T-cell (primary cell): ENCODE measurements at regions of chr14 and their contacts with region 1.

Region 1: GRCh38 chr14:106228541-106229158 is 702.3 kb downstream of the TMEM121 start:
- DNase-seq: peak in 33 of 35 experiments; percentile 7 to 71 (median 43)
- ATAC-seq: peak; percentile 97 to 98 (median 97)
- H3K4me3 ChIP-seq: peak overlapping the region; percentile 12 to 40
- H3K4me3 Mint-ChIP-seq: peak overlapping the region; percentile 71 to 83 (median 73)
- H3K27ac ChIP-seq: peak overlapping the region; percentile 77
- H3K27ac Mint-ChIP-seq: peak overlapping the region; percentile 92 to 97
- H3K4me1 ChIP-seq: peaks cover 24 to 43% of the 10 kb centered on the region in 2 experiments
- H3K4me1 Mint-ChIP-seq: peaks cover 61 to 69% (median 66%) of the 10 kb centered on the region in 3 donors
- H3K27me3 ChIP-seq: no peaks in the 10 kb centered on the region
- H3K27me3 Mint-ChIP-seq: no peaks in the 10 kb centered on the region

Region 2: DNA sequence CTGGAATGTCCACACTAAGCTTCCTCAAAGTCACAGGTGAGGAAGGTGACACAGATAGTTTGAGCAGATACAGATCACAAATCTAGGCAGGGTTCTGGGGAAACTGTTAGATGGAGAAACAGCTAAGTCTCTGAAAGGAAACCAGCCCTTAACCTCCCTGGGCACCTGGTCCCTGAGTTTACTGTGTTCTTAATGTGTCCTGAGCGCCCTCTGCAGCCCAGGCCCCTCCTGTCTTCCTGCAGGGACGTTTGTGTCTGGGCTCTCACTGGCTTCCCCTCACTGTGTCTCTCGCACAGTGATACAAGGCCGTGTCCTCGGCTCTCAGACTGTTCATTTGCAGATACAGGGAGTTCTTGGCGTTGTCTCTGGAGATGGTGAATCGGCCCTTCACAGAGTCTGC is 18.0 kb before region 1 on chr14:
- CTCF ChIA-PET with region 1: interaction called, 8 to 29 read pairs
- POLR2A ChIA-PET with region 1: no interaction called
- DNase-seq: peak in 12 of 35 experiments; percentile 11 to 39 (median 26)
- ATAC-seq: peak; percentile 56 to 66 (median 60)
- H3K4me3 ChIP-seq: no peak overlapping the region
- H3K4me3 Mint-ChIP-seq: no peak overlapping the region
- H3K27ac ChIP-seq: no peak overlapping the region
- H3K27ac Mint-ChIP-seq: peak overlapping the region in 1 of 2 donors; percentile 36
- H3K4me1 ChIP-seq: no peaks in the 10 kb centered on the region
- H3K4me1 Mint-ChIP-seq: peaks cover 11 to 16% (median 14%) of the 10 kb centered on the region in 3 donors
- H3K27me3 ChIP-seq: peaks cover 0 to 23% of the 10 kb centered on the region in 2 experiments
- H3K27me3 Mint-ChIP-seq: peaks cover 0 to 25% of the 10 kb centered on the region in 2 donors